Naive thymus-derived CD4-positive, alpha-beta T cell (primary cell): ENCODE measurements at regions of chr2 and their contacts with region 1.

Region 1: GRCh38 chr2:147756103-147756502 is 88.7 kb upstream of the ACVR2A start:
- DNase-seq: no peak
- ATAC-seq: no peak
- H3K4me3 ChIP-seq: no peak overlapping the region
- H3K4me3 Mint-ChIP-seq: no peak overlapping the region
- H3K27ac ChIP-seq: no peak overlapping the region
- H3K27ac Mint-ChIP-seq: no peak overlapping the region
- H3K4me1 ChIP-seq: no peaks in the 10 kb centered on the region
- H3K4me1 Mint-ChIP-seq: no peaks in the 10 kb centered on the region
- H3K27me3 ChIP-seq: no peaks in the 10 kb centered on the region
- H3K27me3 Mint-ChIP-seq: peaks cover 0 to 6% (median 0%) of the 10 kb centered on the region in 5 donors

Region 2: GRCh38 chr2:147715807-147716206 is 40.3 kb before region 1 on chr2:
- CTCF ChIA-PET with region 1: no interaction called
- POLR2A ChIA-PET with region 1: no interaction called
- intact Hi-C with region 1: loop called in 1 of 2 experiments (anchors 1 kb)
- DNase-seq: no peak
- ATAC-seq: no peak
- H3K4me3 ChIP-seq: no peak overlapping the region
- H3K4me3 Mint-ChIP-seq: no peak overlapping the region
- H3K27ac ChIP-seq: no peak overlapping the region
- H3K27ac Mint-ChIP-seq: no peak overlapping the region
- H3K4me1 ChIP-seq: no peaks in the 10 kb centered on the region
- H3K4me1 Mint-ChIP-seq: no peaks in the 10 kb centered on the region
- H3K27me3 ChIP-seq: no peaks in the 10 kb centered on the region
- H3K27me3 Mint-ChIP-seq: peaks cover 0 to 12% (median 0%) of the 10 kb centered on the region in 5 donors

Region 3: GRCh38 chr2:147789720-147790119 is 33.6 kb after region 1 on chr2:
- CTCF ChIA-PET with region 1: no interaction called
- POLR2A ChIA-PET with region 1: no interaction called
- intact Hi-C with region 1: no loop called
- DNase-seq: no peak
- ATAC-seq: no peak
- H3K4me3 ChIP-seq: no peak overlapping the region
- H3K4me3 Mint-ChIP-seq: no peak overlapping the region
- H3K27ac ChIP-seq: no peak overlapping the region
- H3K27ac Mint-ChIP-seq: no peak overlapping the region
- H3K4me1 ChIP-seq: no peaks in the 10 kb centered on the region
- H3K4me1 Mint-ChIP-seq: peaks cover 0 to 10% (median 7%) of the 10 kb centered on the region in 7 donors
- H3K27me3 ChIP-seq: no peaks in the 10 kb centered on the region
- H3K27me3 Mint-ChIP-seq: no peaks in the 10 kb centered on the region